ENCODE measurements at regions of chr13 and their contacts with region 1.

Region 1: DNA sequence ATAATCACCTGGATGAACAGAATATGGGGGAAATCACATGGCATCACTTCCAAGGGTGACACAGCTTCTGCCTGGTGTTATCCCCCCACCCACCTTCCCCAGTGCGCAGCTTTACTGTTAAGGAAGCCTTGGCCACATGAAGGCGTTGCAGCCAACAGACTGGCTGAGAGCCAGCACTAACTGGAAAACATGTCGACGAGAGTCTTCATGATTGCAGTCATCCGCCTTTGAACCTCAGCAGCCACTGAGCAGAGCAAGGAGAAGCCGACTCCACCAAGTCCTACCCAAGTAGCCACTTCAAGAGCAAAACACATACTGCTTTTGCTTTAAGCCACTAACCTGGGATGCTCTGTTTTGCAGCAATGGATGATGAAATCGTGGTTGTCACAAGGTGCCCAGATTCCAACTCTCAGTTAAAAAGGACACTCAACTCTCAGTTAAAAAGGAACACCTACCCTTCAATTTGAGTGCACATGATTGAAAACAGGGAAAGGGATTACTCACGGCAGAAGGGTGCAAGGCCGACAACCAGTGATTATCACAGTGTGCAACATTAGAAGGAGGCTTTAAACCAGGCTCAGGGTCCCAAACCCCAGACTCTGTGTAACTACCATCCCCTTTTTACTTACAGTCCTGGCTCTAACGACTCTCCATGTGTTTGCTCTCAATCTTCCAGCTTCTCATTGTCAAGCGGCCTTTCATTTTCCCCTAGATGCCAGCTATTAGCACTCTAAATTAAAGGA is 149.1 kb downstream of the KLF12 start:
- DNase-seq: peak in 3 of 5 donors; percentile 30 to 59 (median 32)
- ATAC-seq: peak in 2 of 4 donors; percentile 17 to 18
- H3K4me3 ChIP-seq: no peak overlapping the region
- H3K27ac ChIP-seq: peak overlapping the region in 1 of 12 donors; percentile 39
- H3K4me1 ChIP-seq: peaks cover 0 to 62% (median 40%) of the 10 kb centered on the region in 12 donors
- H3K27me3 ChIP-seq: no peaks in the 10 kb centered on the region
- CTCF ChIP-seq: no peak
- POLR2A ChIP-seq: no peak

Region 2: GRCh38 chr13:73880365-73880764 is 104.8 kb before region 1 on chr13:
- intact Hi-C with region 1: loop called in 1 of 10 experiments (anchors 5 kb)
- DNase-seq: no peak
- ATAC-seq: peak in 1 of 4 donors; percentile 47
- H3K4me3 ChIP-seq: no peak overlapping the region
- H3K27ac ChIP-seq: no peak overlapping the region
- H3K4me1 ChIP-seq: peaks cover 0 to 23% (median 11%) of the 10 kb centered on the region in 12 donors
- H3K27me3 ChIP-seq: no peaks in the 10 kb centered on the region
- CTCF ChIP-seq: no peak
- POLR2A ChIP-seq: no peak

Region 3: GRCh38 chr13:74015137-74015536 is 30.0 kb after region 1 on chr13:
- intact Hi-C with region 1: loop called in 1 of 10 experiments (anchors 2 kb)
- DNase-seq: no peak
- ATAC-seq: no peak
- H3K4me3 ChIP-seq: no peak overlapping the region
- H3K27ac ChIP-seq: no peak overlapping the region
- H3K4me1 ChIP-seq: peaks cover 0 to 27% (median 6%) of the 10 kb centered on the region in 12 donors
- H3K27me3 ChIP-seq: no peaks in the 10 kb centered on the region
- CTCF ChIP-seq: peak in 4 of 12 donors; percentile 12 to 43 (median 24)
- POLR2A ChIP-seq: no peak

Measured in heart left ventricle (tissue), 16 donors.